ENCODE measurements at regions of chr19 and their contacts with region 1.

Region 1: GRCh38 chr19:2475702-2476450 is at the start of gene GADD45B:
- DNase-seq: peak; percentile 97 to 98 (median 97)
- H3K4me3 ChIP-seq: peak within 1 kb of the TSS; percentile 75 to 99 (median 91)
- H3K27ac ChIP-seq: peak within 1 kb of the TSS in 1 of 2 experiments; percentile 80
- H3K4me1 ChIP-seq: peaks cover 2 to 58% (median 51%) of the 10 kb centered on the region in 4 experiments
- H3K27me3 ChIP-seq: no peaks in the 10 kb centered on the region

Region 2: DNA sequence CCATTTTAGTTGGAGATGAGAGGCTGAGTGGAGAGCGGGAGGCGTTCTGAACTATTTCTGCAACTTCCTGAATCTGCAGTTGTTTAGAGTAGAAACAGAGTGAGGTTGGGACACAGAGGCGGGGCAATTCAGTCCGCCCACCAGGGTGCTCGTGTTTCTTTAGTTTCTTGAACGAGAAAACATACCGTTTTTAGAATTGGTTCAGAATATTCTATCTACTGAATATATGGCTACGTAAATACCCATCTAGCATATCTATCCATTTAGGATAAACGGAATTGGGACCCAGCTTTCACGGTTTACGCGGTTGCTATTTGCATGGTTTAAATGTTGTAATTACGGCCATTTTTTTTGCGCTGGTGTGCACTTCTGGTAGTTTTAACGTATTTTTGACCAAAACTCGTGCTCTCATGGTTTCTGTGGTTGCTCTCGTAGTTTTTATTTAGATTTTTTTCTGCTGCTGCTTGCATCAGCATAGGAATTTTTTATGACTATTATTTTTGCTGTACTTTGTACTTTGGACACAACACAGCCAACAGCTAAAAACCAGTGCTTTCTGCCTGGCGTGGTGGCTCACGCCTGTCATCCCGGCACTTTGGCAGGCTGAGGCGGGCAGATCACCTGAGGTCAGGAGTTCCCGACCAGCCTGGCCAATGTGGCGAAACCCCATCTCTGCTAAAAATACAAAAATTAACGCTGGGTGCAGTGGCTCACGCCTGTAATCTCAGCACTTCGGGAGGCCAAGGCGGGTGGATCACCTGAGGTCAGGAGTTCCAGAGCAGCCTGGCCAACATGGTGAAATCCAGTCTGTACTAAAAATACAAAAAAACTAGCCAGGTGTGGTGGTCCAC is 81.2 kb before region 1 on chr19:
- CTCF ChIA-PET with region 1: no interaction called
- POLR2A ChIA-PET with region 1: no interaction called
- DNase-seq: peak; percentile 53 to 86 (median 71)
- H3K4me3 ChIP-seq: peak overlapping the region in 1 of 7 experiments; percentile 20
- H3K27ac ChIP-seq: peak overlapping the region in 1 of 2 experiments; percentile 25
- H3K4me1 ChIP-seq: peaks cover 0 to 20% (median 14%) of the 10 kb centered on the region in 4 experiments
- H3K27me3 ChIP-seq: no peaks in the 10 kb centered on the region

Region 3: DNA sequence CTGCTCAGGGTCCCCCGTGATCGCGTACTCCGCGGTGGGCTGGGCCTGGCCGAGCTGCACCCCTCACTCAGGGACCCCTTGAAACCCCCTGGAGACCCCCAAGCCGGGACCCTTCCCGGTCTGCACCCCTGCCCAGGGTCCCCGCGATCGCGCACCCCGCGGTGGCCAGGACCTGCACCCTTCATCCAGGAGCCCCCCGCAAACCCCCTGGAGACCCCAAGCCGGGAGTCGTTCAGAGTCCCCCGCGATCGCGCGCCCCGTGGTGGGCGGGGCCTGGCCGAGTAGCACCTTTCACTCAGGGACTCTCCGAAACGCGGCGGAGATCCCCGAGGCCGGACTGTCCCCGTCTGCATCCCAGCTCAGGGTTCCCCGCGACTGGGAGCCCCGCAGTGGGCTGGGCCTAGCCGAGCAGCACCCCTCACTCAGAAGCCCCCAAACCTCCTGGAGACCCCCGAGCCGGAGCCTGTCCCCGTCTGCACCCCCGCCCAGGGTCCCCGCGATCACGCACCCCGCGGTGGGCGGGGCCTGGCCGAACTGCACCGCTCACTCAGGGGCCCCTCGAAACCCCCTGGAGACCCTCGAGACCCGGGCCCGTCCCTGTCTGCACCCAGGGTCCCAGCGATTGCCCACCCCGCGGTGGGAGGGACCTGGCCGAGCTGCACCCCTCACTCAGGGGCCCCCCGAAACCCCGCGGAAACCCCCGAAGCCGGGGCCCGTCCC is 19.9 kb before region 1 on chr19:
- CTCF ChIA-PET with region 1: interaction called, 7 read pairs
- POLR2A ChIA-PET with region 1: interaction called, 14 read pairs
- DNase-seq: peak in 2 of 3 donors; percentile 31 to 40
- H3K4me3 ChIP-seq: peak overlapping the region; percentile 79 to 90 (median 85)
- H3K27ac ChIP-seq: peak overlapping the region in 1 of 2 experiments; percentile 76
- H3K4me1 ChIP-seq: peaks cover 0 to 20% (median 15%) of the 10 kb centered on the region in 4 experiments
- H3K27me3 ChIP-seq: no peaks in the 10 kb centered on the region

Region 4: GRCh38 chr19:2494444-2495129 is 18.7 kb after region 1 on chr19:
- CTCF ChIA-PET with region 1: interaction called, 3 read pairs
- POLR2A ChIA-PET with region 1: interaction called, 21 read pairs
- DNase-seq: peak in 2 of 3 donors; percentile 73 to 77
- H3K4me3 ChIP-seq: peak overlapping the region; percentile 53 to 87 (median 75)
- H3K27ac ChIP-seq: no peak overlapping the region
- H3K4me1 ChIP-seq: peaks cover 0 to 50% (median 50%) of the 10 kb centered on the region in 4 experiments
- H3K27me3 ChIP-seq: peaks cover 0 to 15% (median 4%) of the 10 kb centered on the region in 5 experiments

Region 5: GRCh38 chr19:2552859-2553258 is 77.0 kb after region 1 on chr19:
- CTCF ChIA-PET with region 1: interaction called, 4 read pairs
- POLR2A ChIA-PET with region 1: interaction called, 10 read pairs
- DNase-seq: peak; percentile 90 to 95 (median 95)
- H3K4me3 ChIP-seq: peak overlapping the region in 6 of 7 experiments; percentile 47 to 77 (median 50)
- H3K27ac ChIP-seq: peak overlapping the region in 1 of 2 experiments; percentile 71
- H3K4me1 ChIP-seq: peaks cover 0 to 48% (median 32%) of the 10 kb centered on the region in 4 experiments
- H3K27me3 ChIP-seq: no peaks in the 10 kb centered on the region

Region 6: DNA sequence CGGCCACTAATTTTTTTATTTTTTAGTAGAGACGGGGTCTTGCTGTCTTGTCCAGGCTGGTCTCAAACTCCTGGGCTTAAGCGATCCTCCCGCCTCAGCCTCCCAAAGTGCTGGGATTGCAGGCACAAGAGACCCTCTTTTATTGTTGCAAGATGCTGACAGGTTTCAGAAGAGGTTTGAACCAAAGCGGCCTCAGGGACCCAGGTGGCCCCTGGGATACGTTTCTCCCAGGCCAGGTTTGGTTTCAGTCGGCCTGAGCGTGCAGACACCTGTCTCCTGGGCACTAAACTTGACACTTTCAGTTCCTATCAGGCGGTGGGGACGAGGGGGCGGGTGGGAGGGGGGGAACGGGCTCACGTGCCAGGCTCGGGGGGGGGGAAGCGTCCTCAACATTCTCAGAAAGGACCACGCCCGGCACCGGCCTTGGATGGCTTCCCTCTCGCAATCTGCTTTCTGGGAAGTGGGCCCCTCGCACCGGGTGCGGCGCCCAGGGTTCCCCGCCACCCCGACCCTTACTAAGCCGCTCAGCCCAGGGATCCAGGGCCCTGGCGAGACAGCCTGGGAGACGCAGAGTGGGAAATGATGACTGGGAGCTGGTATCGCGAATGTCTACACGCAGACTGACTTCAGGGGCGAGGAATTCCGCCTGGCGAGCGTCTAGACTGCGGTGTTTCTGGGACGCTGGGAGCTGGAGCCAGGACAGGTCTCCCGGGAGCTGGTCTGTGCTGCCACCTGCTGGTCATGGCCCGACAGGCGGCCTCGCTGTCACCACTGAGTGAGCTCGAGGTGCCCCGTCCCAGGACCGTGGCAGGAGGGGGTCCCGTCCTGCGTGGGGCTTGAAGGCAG is 135.0 kb after region 1 on chr19:
- CTCF ChIA-PET with region 1: interaction called, 18 read pairs
- POLR2A ChIA-PET with region 1: interaction called, 19 read pairs
- DNase-seq: peak; percentile 69 to 76 (median 71)
- H3K4me3 ChIP-seq: peak overlapping the region; percentile 11 to 87 (median 64)
- H3K27ac ChIP-seq: no peak overlapping the region
- H3K4me1 ChIP-seq: peaks cover 0 to 40% (median 31%) of the 10 kb centered on the region in 4 experiments
- H3K27me3 ChIP-seq: no peaks in the 10 kb centered on the region

Region 7: DNA sequence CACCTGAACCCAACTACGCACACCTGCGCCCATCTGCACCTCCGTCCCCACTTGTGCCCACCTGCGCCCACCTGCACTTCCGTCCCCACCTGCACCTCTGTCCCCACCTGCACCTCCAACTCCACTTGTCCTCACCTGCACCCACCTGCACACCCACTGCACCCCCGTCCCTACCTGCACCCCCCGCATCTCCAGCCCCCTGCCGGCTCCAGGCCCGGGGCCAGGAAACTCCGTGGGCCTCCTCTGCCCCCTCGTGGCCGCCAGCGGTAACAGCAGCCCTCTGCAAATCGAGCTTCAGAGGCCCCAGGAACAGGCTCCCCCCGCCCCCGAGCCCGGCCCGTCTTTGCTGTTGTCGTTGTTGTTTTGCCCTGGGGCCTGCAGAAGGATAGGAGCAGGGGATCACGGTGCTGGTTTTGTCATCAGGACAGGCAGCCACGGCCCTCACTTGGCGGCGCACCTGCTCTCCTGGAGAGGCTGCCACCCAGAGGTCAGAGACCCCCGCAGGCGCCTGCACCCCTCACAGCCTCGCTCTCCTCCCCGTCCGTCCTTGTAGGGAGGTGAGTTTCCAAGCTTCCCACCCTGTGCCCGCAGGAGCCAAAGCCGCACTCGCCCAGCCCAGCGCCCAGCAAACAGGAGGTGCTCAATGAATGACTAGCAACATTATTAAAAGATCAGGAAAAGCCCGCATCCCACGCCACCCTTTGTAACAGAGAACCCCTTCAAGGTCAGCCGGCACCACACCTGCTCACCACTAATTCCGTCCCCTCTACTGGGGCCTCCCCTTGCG is 161.2 kb after region 1 on chr19:
- CTCF ChIA-PET with region 1: interaction called, 12 read pairs
- POLR2A ChIA-PET with region 1: interaction called, 5 read pairs
- DNase-seq: peak; percentile 72 to 80 (median 78)
- H3K4me3 ChIP-seq: peak overlapping the region in 4 of 7 experiments; percentile 13 to 67 (median 38)
- H3K27ac ChIP-seq: no peak overlapping the region
- H3K4me1 ChIP-seq: peaks cover 1 to 28% (median 22%) of the 10 kb centered on the region in 4 experiments
- H3K27me3 ChIP-seq: no peaks in the 10 kb centered on the region

Measured in common myeloid progenitor, CD34-positive (primary cell).